Naive thymus-derived CD4-positive, alpha-beta T cell (primary cell): ENCODE measurements at regions of chr7 and their contacts with region 1.

Region 1: DNA sequence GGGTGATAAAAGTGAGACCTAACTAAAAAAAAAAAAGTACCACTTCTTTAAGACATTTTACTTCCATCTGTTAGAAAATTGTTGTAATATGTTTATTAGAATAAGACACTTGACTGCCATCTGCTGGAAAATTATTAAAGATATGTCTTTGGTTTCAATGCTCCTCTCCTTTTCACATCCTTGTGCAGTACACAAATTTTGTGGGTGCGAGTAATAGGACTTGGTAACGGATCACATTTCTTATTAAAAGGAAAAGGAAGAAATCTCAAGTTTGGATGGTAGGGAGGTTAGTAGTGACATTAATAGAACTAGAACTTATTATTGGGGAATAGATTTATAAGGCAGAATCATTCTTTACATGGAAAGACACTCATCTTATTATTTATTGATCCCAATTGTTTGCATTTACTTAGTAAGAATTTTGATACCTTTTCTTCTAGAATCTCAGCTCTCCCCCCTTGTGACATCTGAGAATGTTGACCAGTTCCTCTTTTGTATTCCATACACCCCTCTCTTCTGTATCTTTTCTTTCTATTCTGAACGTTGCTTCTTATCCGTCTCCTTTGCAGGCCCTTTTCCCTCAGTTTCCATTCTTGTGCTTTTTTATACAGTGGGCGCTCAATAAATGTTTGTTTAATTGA is 43.1 kb upstream of the RPA3 start:
- DNase-seq: peak in 7 of 9 donors; percentile 25 to 59 (median 51)
- ATAC-seq: peak; percentile 45
- H3K4me3 ChIP-seq: peak overlapping the region; percentile 48
- H3K4me3 Mint-ChIP-seq: peak overlapping the region; percentile 69 to 99 (median 90)
- H3K27ac ChIP-seq: peak overlapping the region; percentile 76
- H3K27ac Mint-ChIP-seq: peak overlapping the region; percentile 88 to 99 (median 94)
- H3K4me1 ChIP-seq: peaks cover 8 to 31% of the 10 kb centered on the region in 2 donors
- H3K4me1 Mint-ChIP-seq: peaks cover 30 to 54% (median 51%) of the 10 kb centered on the region in 7 donors
- H3K27me3 ChIP-seq: no peaks in the 10 kb centered on the region
- H3K27me3 Mint-ChIP-seq: no peaks in the 10 kb centered on the region

Region 2: GRCh38 chr7:7566651-7567611 is 194.5 kb before region 1 on chr7 and contains the start of gene MIOS:
- CTCF ChIA-PET with region 1: no interaction called
- POLR2A ChIA-PET with region 1: no interaction called
- intact Hi-C with region 1: loop called in 1 of 2 experiments (anchors 10 kb)
- DNase-seq: peak; percentile 73 to 88 (median 83)
- ATAC-seq: peak; percentile 95
- H3K4me3 ChIP-seq: peak within 1 kb of the TSS; percentile 77
- H3K4me3 Mint-ChIP-seq: peak within 1 kb of the TSS in 9 of 10 donors; percentile 75 to 92 (median 86)
- H3K27ac ChIP-seq: peak within 1 kb of the TSS; percentile 98
- H3K27ac Mint-ChIP-seq: peak within 1 kb of the TSS; percentile 80 to 91 (median 85)
- H3K4me1 ChIP-seq: peaks cover 27 to 29% of the 10 kb centered on the region in 2 donors
- H3K4me1 Mint-ChIP-seq: peaks cover 21 to 41% (median 37%) of the 10 kb centered on the region in 7 donors
- H3K27me3 ChIP-seq: no peaks in the 10 kb centered on the region
- H3K27me3 Mint-ChIP-seq: no peaks in the 10 kb centered on the region
- total RNA-seq, gene MIOS: 24.3 to 31.7 (median 28.7) TPM

Region 3: GRCh38 chr7:7681179-7681935 is 80.1 kb before region 1 on chr7:
- CTCF ChIA-PET with region 1: interaction called, 22 read pairs
- POLR2A ChIA-PET with region 1: interaction called, 4 read pairs
- intact Hi-C with region 1: loop called (anchors 1 kb)
- DNase-seq: peak in 7 of 9 donors; percentile 37 to 66 (median 58)
- ATAC-seq: peak; percentile 84
- H3K4me3 ChIP-seq: no peak overlapping the region
- H3K4me3 Mint-ChIP-seq: peak overlapping the region in 5 of 10 donors; percentile 8 to 56 (median 25)
- H3K27ac ChIP-seq: no peak overlapping the region
- H3K27ac Mint-ChIP-seq: peak overlapping the region; percentile 1 to 76 (median 18)
- H3K4me1 ChIP-seq: peaks cover 0 to 15% of the 10 kb centered on the region in 2 donors
- H3K4me1 Mint-ChIP-seq: peaks cover 11 to 48% (median 37%) of the 10 kb centered on the region in 7 donors
- H3K27me3 ChIP-seq: no peaks in the 10 kb centered on the region
- H3K27me3 Mint-ChIP-seq: no peaks in the 10 kb centered on the region

Region 4: GRCh38 chr7:7816084-7816483 is 54.6 kb after region 1 on chr7:
- CTCF ChIA-PET with region 1: interaction called, 3 read pairs
- POLR2A ChIA-PET with region 1: no interaction called
- intact Hi-C with region 1: loop called in 1 of 2 experiments (anchors 5 kb)
- DNase-seq: peak in 5 of 9 donors; percentile 16 to 44 (median 34)
- ATAC-seq: peak; percentile 58
- H3K4me3 ChIP-seq: no peak overlapping the region
- H3K4me3 Mint-ChIP-seq: peak overlapping the region in 9 of 10 donors; percentile 14 to 74 (median 51)
- H3K27ac ChIP-seq: no peak overlapping the region
- H3K27ac Mint-ChIP-seq: peak overlapping the region in 5 of 9 donors; percentile 26 to 47 (median 32)
- H3K4me1 ChIP-seq: peaks cover 14 to 24% of the 10 kb centered on the region in 2 donors
- H3K4me1 Mint-ChIP-seq: peaks cover 24 to 40% (median 34%) of the 10 kb centered on the region in 7 donors
- H3K27me3 ChIP-seq: no peaks in the 10 kb centered on the region
- H3K27me3 Mint-ChIP-seq: no peaks in the 10 kb centered on the region

Region 5: DNA sequence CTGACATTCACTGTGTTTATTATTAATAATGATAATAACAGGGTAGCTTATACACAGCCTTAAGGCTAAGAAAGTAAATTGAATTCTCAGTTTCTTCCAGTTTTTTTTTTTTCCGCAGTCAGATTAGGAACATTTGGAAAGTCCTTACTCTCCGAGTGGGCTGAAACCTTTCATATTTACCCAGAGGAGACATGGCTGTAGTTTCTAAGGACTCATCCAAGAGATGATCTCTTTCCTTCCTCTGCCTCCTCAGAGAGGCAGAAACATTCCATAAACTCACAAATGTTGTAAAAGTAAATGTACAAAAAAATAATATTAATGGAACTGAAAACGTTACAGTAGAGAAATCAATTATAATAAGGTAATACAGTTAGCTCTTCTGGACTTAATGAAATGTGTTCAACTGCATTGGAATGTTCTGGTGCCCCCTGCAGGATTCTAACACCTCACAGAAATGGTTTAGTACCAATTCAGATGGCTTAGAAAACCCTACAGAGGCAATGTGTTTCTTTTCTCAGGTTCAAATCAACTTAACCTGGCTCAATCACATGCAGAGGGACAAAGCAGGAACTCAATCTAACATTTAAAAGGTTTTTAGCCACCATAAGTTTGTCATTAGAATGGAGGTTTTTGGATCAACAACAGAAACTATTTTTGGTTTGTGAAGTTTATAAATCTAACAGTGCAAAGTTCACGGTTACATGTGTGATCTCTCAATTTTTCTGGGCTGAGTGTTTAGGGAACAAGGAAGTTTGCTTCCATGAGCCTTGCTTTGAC is 428.8 kb after region 1 on chr7:
- CTCF ChIA-PET with region 1: interaction called, 8 read pairs
- POLR2A ChIA-PET with region 1: no interaction called
- intact Hi-C with region 1: loop called (anchors 1 to 2 kb)
- DNase-seq: peak; percentile 11 to 73 (median 65)
- ATAC-seq: peak; percentile 89
- H3K4me3 ChIP-seq: no peak overlapping the region
- H3K4me3 Mint-ChIP-seq: no peak overlapping the region
- H3K27ac ChIP-seq: no peak overlapping the region
- H3K27ac Mint-ChIP-seq: peak overlapping the region in 2 of 9 donors; percentile 5 to 42
- H3K4me1 ChIP-seq: peaks cover 0 to 6% of the 10 kb centered on the region in 2 donors
- H3K4me1 Mint-ChIP-seq: peaks cover 7 to 33% (median 17%) of the 10 kb centered on the region in 7 donors
- H3K27me3 ChIP-seq: no peaks in the 10 kb centered on the region
- H3K27me3 Mint-ChIP-seq: peaks cover 0 to 10% (median 8%) of the 10 kb centered on the region in 5 donors